Lower leg skin (tissue), 4 donors: ENCODE measurements at regions of chr15 and their contacts with region 1.

Region 1: GRCh38 chr15:59315914-59316451 is 56.7 kb downstream of the MYO1E start:
- DNase-seq: peak in 1 of 2 donors; percentile 37
- H3K4me3 ChIP-seq: no peak overlapping the region
- CTCF ChIP-seq: no peak
- POLR2A ChIP-seq: no peak

Region 2: DNA sequence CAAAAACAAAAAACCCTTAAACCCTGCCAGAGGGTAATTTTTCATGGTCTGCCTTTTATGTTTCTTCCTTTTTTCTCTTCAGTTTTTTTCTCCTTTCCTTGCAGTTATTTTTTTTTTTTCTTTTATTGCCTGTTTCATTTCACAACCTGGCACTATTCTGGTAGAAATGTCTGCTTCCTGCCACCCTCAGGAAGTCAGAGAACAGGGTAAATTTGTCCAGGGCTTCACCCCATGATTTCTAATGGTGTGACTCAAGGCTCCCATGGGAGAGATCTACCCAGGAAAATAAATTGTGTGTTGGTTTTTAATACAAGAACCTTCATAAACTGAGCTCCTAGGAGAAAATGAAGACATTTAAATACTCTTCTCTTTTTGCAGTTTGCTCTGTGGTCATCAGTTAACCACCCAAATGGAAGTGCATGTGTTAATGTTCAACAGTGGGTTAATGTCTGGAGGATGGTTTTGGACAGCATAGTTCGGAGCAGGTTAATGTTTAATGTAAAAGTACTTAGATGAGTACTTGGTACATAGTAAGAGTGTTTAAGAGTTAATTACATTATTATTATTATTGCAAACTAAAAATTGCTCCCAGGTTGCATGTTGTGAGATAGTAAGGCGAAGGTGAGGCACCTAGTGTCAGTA is 1893.7 kb before region 1 on chr15:
- intact Hi-C with region 1: no loop called
- DNase-seq: no peak
- H3K4me3 ChIP-seq: no peak overlapping the region
- CTCF ChIP-seq: no peak
- POLR2A ChIP-seq: no peak

Region 3: GRCh38 chr15:57551717-57552677 is 1764.0 kb before region 1 on chr15:
- intact Hi-C with region 1: no loop called
- DNase-seq: peak in 1 of 2 donors; percentile 57
- H3K4me3 ChIP-seq: no peak overlapping the region
- CTCF ChIP-seq: no peak
- POLR2A ChIP-seq: no peak

Region 4: DNA sequence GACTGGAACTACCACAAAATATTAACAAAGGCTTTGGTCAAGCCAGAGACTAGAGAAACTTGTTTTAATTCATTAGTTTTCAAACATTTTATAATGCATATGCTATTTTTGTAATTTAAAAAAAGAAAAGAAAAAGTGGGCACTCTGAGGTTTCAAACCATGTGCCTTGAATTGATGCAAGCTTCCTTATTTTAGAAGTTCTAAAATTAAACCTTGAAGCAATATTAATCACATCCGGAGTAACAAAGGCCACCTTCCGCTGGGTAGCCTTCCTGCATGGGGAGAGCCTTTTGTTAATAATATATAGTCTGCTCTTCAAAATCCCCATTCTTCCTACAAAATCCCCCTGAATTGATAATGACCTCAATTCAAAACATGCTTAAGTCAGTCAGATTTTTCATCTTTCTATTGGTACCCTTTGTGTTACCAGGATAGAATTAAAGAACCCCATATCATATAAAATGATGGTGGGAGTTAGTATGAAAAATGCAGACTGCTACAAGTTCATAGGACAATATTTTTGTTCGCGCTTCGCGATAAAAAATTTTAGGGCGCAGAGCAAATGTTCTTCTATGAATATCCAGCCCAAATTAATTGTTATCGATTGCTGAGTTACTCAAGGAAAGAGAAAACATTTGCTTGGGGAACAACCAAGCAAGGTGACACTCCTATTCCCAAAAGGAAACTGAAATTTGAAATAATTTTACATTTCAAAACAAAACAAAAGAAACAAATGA is 78.7 kb before region 1 on chr15:
- intact Hi-C with region 1: no loop called
- DNase-seq: no peak
- H3K4me3 ChIP-seq: no peak overlapping the region
- CTCF ChIP-seq: no peak
- POLR2A ChIP-seq: no peak

Region 5: DNA sequence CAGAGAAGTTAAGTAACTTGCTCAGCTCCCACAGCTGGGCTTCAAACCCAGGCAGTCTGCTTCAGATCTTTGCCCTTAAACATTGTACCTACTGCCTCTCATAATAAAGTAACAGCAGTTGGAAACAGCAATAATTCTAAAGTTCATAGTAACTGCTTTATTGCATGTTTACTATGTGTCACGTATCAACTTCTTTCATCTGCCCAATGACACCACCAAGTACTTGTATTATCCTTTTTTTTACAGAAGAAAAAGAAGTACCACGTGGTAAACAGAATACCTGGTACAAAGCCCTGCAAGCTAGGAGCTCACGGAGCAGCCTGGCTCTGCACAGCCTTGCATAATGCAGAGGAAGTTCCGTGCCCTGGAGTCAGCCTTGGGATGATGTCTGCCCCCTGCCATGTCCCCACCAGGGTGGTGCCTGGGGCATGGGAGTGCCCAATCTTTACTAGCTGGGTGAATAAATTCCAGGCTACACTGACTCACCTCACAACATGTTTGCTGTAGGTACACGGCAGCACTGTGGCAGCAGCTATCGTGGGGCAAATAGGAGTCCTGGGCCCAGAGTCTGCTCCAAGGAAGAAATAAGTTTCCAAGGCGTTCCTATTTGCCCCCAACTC is 32.2 kb before region 1 on chr15:
- intact Hi-C with region 1: loop called (anchors 2 kb)
- DNase-seq: peak; percentile 55 to 81
- H3K4me3 ChIP-seq: no peak overlapping the region
- CTCF ChIP-seq: no peak
- POLR2A ChIP-seq: no peak

Region 6: DNA sequence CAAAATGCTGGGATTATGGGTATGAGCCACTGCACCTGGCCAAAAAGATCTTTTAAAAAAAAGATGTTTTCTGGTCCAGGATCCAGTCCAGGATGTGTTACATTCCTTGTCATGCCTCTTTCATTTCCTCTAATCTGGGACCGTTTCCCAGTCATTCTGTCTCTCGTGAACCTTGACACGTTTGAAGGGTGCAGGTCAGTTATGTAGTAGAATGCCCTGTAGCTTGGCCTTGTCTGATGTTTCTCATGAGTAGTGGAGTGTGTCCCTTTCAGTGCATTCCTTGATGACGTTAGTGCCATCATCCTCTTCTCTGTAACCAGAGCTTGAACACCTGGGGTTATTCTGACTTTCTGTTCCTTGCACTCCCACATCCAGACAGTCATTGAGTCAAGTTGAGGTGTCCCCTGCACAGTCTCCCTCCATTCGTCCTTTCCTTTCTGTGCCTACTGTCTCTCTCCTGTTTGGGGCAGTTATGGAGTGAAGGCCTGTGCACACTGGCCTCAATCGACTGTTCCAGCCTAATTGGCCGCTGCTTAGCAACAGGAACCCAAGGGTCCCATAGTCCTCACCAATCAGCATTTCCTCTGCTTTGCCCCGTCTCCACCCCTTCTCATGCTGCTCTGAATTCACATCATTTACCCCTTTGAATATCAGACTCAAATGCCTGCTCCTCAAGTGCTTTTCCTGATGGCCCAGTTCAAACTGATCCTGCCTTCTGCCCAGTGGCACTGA is 127.5 kb after region 1 on chr15:
- intact Hi-C with region 1: no loop called
- DNase-seq: peak in 1 of 2 donors; percentile 57
- H3K4me3 ChIP-seq: no peak overlapping the region
- CTCF ChIP-seq: no peak
- POLR2A ChIP-seq: no peak